ENCODE measurements at regions of chr12 and their contacts with region 1.

Region 1: DNA sequence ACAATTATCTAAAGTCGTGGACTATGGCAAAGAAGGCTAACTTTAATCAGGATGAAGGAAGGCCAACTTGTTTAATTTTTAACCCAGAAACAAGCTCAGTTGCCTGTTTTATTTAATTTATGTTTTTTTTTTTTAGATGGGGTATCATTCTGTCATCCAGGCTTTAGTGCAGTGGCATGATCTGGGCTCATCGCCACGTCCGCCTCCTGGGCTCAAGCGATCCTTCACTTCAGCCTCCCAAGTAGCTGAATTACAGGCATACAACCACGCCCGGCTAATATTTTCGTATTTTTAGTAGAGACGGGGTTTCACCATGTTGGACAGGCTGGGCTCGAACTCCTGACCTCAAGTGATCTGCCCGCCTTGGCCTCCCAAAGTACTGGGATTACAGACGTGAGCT is 19.7 kb downstream of the NUDT4 start:
- DNase-seq: no peak
- H3K4me3 ChIP-seq: no peak overlapping the region
- H3K27ac ChIP-seq: no peak overlapping the region
- H3K4me1 ChIP-seq: no peaks in the 10 kb centered on the region
- H3K27me3 ChIP-seq: no peaks in the 10 kb centered on the region
- CTCF ChIP-seq: no peak
- EP300 ChIP-seq: no peak
- POLR2A ChIP-seq: no peak
- RAD21 ChIP-seq: no peak

Region 2: DNA sequence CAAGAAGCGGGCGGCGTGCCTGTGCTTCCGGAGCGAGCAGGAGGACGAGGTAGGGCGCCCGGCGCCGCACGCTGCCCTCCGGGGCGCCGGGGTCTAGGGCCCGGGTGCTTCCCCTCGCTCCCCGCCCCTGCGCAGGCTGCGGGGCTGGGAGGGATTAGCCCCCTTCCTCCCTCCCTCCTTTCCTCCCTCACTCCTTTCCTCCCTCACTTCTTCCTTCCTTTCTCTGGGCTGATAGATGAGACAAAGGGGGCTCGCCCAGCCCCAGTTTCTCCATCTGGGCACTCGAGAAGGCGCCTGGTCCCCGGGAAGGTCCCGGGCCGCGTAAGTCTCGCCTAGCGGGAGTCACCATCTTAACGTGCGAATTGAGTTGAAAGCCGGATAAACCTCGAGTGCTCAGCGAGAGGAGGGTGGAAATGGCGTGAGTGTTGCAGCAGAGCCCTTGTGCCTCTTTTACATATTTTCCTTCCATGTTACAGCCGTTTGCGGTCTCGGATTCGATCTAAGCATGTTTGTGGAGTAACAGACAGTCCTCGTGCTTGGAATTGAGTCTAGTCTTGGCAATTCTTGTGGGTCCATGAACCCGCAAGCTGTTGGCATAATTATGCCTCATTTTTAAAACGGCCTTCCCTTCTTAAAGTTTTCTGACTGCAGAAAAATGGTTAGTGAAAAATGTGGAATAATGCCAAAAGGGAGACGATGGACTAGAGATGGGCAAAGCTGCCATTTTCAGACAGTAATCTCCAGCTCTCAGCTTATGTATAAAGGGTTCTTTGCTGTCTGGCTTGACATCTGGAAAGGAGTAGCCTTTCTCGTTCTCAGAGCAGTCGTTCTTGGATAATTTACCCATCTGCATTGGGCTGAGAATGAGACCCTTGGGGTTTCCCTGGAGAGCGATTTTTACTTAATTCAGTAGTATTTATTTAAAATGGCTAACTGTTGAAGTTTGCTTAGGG is 18.8 kb before region 1 on chr12:
- CTCF ChIA-PET with region 1: interaction called, 14 read pairs
- POLR2A ChIA-PET with region 1: no interaction called
- DNase-seq: peak in 1 of 2 experiments; percentile 66
- H3K4me3 ChIP-seq: peak overlapping the region; percentile 59 to 96 (median 82)
- H3K27ac ChIP-seq: 0 out of 2 replicates have a peak overlapping the region, but pooled peaks have one; percentile 16
- H3K4me1 ChIP-seq: peaks cover 13 to 20% (median 15%) of the 10 kb centered on the region in 4 experiments; a peak in 6 of 7 replicates
- H3K27me3 ChIP-seq: no peaks in the 10 kb centered on the region
- CTCF ChIP-seq: no peak
- EP300 ChIP-seq: no peak
- POLR2A ChIP-seq: peak in 1 of 2 experiments; percentile 75; a peak in 1 of 3 replicates
- RAD21 ChIP-seq: no peak